Left ventricle myocardium superior (tissue), 1 donor: ENCODE measurements at regions of chrX and their contacts with region 1.

Region 1: GRCh38 chrX:11533211-11533651 is 132.5 kb downstream of the ARHGAP6 start:
- DNase-seq: no peak
- ATAC-seq: peak; percentile 91

Region 2: GRCh38 chrX:11724122-11725017 is 191.1 kb after region 1 on chrX:
- intact Hi-C with region 1: loop called (anchors 5 kb)
- DNase-seq: no peak
- ATAC-seq: peak; percentile 29

Region 3: DNA sequence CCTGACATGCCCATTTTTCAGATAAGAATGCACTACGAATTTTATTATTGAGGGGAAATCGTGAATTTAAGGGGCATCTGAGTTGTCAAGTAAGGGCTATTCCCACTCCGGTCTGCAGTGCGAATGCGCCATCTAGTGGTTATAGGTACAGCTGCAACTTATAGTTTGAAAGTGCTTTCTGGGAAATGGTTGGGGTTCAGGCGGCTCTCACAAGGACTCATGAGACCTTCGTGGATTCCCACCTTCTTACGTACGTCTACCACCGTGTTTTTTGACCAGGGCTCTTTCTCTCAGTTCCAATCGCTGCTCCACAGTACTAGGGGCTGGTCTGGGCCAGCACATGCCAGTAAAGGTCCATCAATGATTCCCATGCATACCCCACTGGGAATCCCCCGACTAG is 237.1 kb after region 1 on chrX:
- intact Hi-C with region 1: loop called (anchors 5 kb)
- DNase-seq: no peak
- ATAC-seq: peak; percentile 62